Activated CD4-positive, alpha-beta T cell treated with anti-CD3 and anti-CD28 coated beads for 36 hours (primary cell): ENCODE measurements at regions of chr12 and their contacts with region 1.

Region 1: GRCh38 chr12:94690198-94690771 is 39.9 kb upstream of the TMCC3 start:
- DNase-seq: no peak
- ATAC-seq: no peak
- H3K4me3 Mint-ChIP-seq: no peak overlapping the region
- H3K27ac Mint-ChIP-seq: no peak overlapping the region
- H3K4me1 Mint-ChIP-seq: peaks cover 9% of the 10 kb centered on the region
- H3K27me3 Mint-ChIP-seq: peaks cover 2% of the 10 kb centered on the region

Region 2: GRCh38 chr12:94621664-94622359 is 68.5 kb before region 1 on chr12:
- CTCF ChIA-PET with region 1: no interaction called
- POLR2A ChIA-PET with region 1: no interaction called
- intact Hi-C with region 1: loop called in 1 of 2 experiments (anchors 2 kb)
- DNase-seq: peak; percentile 66
- ATAC-seq: peak; percentile 95
- H3K4me3 Mint-ChIP-seq: peak overlapping the region; percentile 25
- H3K27ac Mint-ChIP-seq: peak overlapping the region; percentile 67
- H3K4me1 Mint-ChIP-seq: peaks cover 22% of the 10 kb centered on the region
- H3K27me3 Mint-ChIP-seq: no peaks in the 10 kb centered on the region